Astrocyte of the cerebellum (primary cell): ENCODE measurements at regions of chr13 and their contacts with region 1.

Region 1: GRCh38 chr13:37039896-37040295 is 19.6 kb downstream of the SUPT20H start:
- DNase-seq: no peak
- H3K4me3 ChIP-seq: no peak overlapping the region
- CTCF ChIP-seq: no peak

Region 2: GRCh38 chr13:36965773-36966172 is 74.1 kb before region 1 on chr13:
- in situ Hi-C with region 1: loop called (anchors 5 kb)
- DNase-seq: peak; percentile 16
- H3K4me3 ChIP-seq: no peak overlapping the region
- CTCF ChIP-seq: no peak

Region 3: DNA sequence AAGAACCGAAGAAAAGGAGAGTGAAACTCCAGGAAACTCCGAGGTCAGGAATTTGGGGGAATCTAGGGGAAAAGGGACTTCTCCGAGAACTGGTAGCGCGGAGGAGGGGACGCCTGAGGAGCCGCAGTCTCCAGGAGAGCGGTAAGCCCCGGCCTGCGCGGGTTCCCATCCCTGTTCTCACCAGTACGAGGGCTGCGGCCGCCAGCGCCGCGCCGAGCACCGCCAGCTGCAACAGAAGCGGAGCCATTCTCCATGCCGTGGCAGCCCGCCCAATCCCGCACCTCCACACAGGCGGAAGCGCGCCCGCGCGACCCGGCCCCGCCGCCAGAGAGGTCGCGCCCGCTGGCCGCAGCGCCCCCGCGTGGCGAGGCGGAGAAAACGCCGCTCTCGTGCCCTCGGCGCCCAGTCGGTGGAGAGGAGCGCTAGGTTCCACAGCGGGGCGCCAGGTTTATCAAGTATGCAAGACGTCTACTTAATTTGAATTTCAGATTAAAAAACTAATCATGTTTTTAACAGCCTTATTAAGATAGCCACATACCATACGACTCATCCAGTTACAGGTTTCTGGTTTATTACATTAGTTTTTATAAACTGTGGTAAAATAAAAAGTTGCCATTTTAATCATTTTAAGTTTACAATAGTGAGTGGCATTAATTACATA is 40.7 kb before region 1 on chr13 and contains the start of gene ALG5:
- in situ Hi-C with region 1: no loop called
- DNase-seq: peak; percentile 72
- H3K4me3 ChIP-seq: peak within 1 kb of the TSS; percentile 95
- CTCF ChIP-seq: peak; percentile 63

Region 4: DNA sequence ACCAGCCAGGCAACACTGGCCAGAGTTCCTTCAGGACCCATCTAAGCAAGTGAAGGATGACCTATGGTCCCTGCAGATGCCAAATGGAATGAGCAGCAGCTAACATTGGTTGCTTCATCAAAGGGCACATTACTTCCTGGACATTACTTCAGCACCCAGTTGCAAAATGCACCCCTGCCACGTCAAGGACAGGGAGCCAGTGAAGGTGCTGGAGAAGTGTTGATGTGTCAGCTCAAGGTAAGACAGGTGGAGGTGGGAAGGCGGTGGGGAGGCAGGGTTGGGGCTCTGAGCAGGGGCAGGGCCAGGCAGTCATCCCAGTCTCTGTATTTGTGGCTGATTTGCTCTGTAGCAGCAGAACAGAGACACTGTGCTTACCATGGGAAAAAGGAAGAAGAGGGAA is 51.0 kb after region 1 on chr13:
- in situ Hi-C with region 1: no loop called
- DNase-seq: no peak
- H3K4me3 ChIP-seq: no peak overlapping the region
- CTCF ChIP-seq: no peak